T-cell (primary cell): ENCODE measurements at regions of chr9 and their contacts with region 1.

Region 1: GRCh38 chr9:34171753-34172535 is 6.9 kb upstream of the UBAP1 start:
- DNase-seq: peak in 33 of 35 experiments; percentile 18 to 75 (median 40)
- ATAC-seq: peak; percentile 63 to 100 (median 93)
- H3K4me3 ChIP-seq: no peak overlapping the region
- H3K4me3 Mint-ChIP-seq: peak overlapping the region; percentile 46 to 57 (median 51)
- H3K27ac ChIP-seq: no peak overlapping the region
- H3K27ac Mint-ChIP-seq: peak overlapping the region; percentile 34 to 84
- H3K4me1 ChIP-seq: peaks cover 0 to 16% of the 10 kb centered on the region in 2 experiments
- H3K4me1 Mint-ChIP-seq: peaks cover 8 to 12% (median 10%) of the 10 kb centered on the region in 3 donors
- H3K27me3 ChIP-seq: no peaks in the 10 kb centered on the region
- H3K27me3 Mint-ChIP-seq: no peaks in the 10 kb centered on the region

Region 2: GRCh38 chr9:34133436-34133949 is 38.5 kb before region 1 on chr9:
- CTCF ChIA-PET with region 1: no interaction called
- POLR2A ChIA-PET with region 1: interaction called in 1 of 2 experiments, 13 read pairs
- DNase-seq: no peak
- ATAC-seq: no peak
- H3K4me3 ChIP-seq: no peak overlapping the region
- H3K4me3 Mint-ChIP-seq: no peak overlapping the region
- H3K27ac ChIP-seq: no peak overlapping the region
- H3K27ac Mint-ChIP-seq: no peak overlapping the region
- H3K4me1 ChIP-seq: no peaks in the 10 kb centered on the region
- H3K4me1 Mint-ChIP-seq: no peaks in the 10 kb centered on the region
- H3K27me3 ChIP-seq: no peaks in the 10 kb centered on the region
- H3K27me3 Mint-ChIP-seq: no peaks in the 10 kb centered on the region

Region 3: DNA sequence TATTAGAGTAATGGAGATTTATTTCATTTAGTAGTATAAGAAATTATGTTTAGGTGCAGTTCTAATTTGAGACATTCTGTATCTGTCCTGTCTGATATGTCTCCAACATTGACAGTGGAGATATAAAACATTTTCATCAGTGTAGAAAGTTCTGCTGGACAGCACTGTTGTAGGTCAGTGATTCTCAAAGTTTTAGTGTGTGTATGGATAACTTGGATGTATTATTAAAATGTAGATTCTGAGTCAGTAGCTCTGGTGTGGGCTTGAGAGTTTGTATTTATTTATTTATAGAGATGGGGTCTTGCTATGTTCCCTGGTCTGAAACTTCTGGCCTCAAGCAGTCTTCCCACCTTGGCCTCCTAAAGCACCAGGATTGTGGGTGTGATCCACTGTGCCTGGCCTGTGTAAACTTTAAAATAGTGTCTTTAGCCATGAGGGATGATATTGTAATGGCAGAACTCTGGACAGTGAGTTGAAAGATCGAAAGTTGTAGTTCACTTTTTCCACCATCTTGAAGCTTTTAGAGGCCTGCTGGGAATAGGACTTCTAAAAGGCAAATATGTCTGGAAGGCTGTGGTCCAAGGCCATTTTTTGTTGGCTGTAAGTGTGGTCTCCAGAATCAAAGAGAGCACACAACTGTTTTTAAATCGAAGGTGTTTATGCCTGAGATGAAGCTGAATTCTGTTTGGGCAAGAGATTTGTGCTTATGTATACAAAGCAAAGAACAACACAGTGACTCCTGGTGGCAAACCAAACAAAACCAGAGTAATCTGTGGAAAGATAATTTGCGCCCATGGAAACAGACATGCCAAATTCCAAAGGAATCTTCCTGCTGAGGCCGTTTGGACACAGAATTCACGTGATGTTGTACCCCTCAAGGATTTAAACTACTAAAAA is 19.3 kb after region 1 on chr9:
- CTCF ChIA-PET with region 1: interaction called in 1 of 2 experiments, 3 read pairs
- POLR2A ChIA-PET with region 1: interaction called in 1 of 2 experiments, 13 read pairs
- DNase-seq: peak in 1 of 35 experiments; percentile 21
- ATAC-seq: no peak
- H3K4me3 ChIP-seq: no peak overlapping the region
- H3K4me3 Mint-ChIP-seq: no peak overlapping the region
- H3K27ac ChIP-seq: no peak overlapping the region
- H3K27ac Mint-ChIP-seq: peak overlapping the region; percentile 61 to 76
- H3K4me1 ChIP-seq: peaks cover 16 to 31% of the 10 kb centered on the region in 2 experiments
- H3K4me1 Mint-ChIP-seq: peaks cover 54 to 68% (median 60%) of the 10 kb centered on the region in 3 donors
- H3K27me3 ChIP-seq: no peaks in the 10 kb centered on the region
- H3K27me3 Mint-ChIP-seq: no peaks in the 10 kb centered on the region